Activated CD4-positive, alpha-beta memory T cell treated with anti-CD3 and anti-CD28 coated beads for 36 hours (primary cell): ENCODE measurements at regions of chr14 and their contacts with region 1.

Region 1: GRCh38 chr14:92686900-92687444 is 61.5 kb downstream of the LGMN start:
- DNase-seq: peak; percentile 70
- H3K4me3 Mint-ChIP-seq: no peak overlapping the region
- H3K27ac Mint-ChIP-seq: no peak overlapping the region
- H3K4me1 Mint-ChIP-seq: no peaks in the 10 kb centered on the region
- H3K27me3 Mint-ChIP-seq: no peaks in the 10 kb centered on the region

Region 2: GRCh38 chr14:92719890-92720323 is 32.9 kb after region 1 on chr14:
- CTCF ChIA-PET with region 1: interaction called, 10 read pairs
- POLR2A ChIA-PET with region 1: no interaction called
- intact Hi-C with region 1: no loop called
- DNase-seq: no peak
- H3K4me3 Mint-ChIP-seq: no peak overlapping the region
- H3K27ac Mint-ChIP-seq: no peak overlapping the region
- H3K4me1 Mint-ChIP-seq: peaks cover 8% of the 10 kb centered on the region
- H3K27me3 Mint-ChIP-seq: peaks cover 2% of the 10 kb centered on the region

Region 3: GRCh38 chr14:92783816-92784431 is 97.0 kb after region 1 on chr14:
- CTCF ChIA-PET with region 1: interaction called, 32 read pairs
- POLR2A ChIA-PET with region 1: no interaction called
- intact Hi-C with region 1: no loop called
- DNase-seq: no peak
- H3K4me3 Mint-ChIP-seq: no peak overlapping the region
- H3K27ac Mint-ChIP-seq: no peak overlapping the region
- H3K4me1 Mint-ChIP-seq: peaks cover 14% of the 10 kb centered on the region
- H3K27me3 Mint-ChIP-seq: no peaks in the 10 kb centered on the region